Esophagus squamous epithelium (tissue), 5 donors: ENCODE measurements at regions of chr4 and their contacts with region 1.

Region 1: GRCh38 chr4:75289914-75290582 is 224.2 kb downstream of the RCHY1 start:
- DNase-seq: no peak
- H3K4me3 ChIP-seq: no peak overlapping the region
- H3K27ac ChIP-seq: peak overlapping the region in 3 of 4 donors; percentile 21 to 38 (median 29)
- H3K4me1 ChIP-seq: peaks cover 0 to 15% (median 6%) of the 10 kb centered on the region in 3 donors
- H3K27me3 ChIP-seq: no peaks in the 10 kb centered on the region
- CTCF ChIP-seq: peak in 5 of 6 experiments; percentile 9 to 61 (median 39)
- POLR2A ChIP-seq: no peak

Region 2: GRCh38 chr4:74932816-74933561 is 357.1 kb before region 1 on chr4 and contains the start of gene PARM1:
- intact Hi-C with region 1: loop called (anchors 10 kb)
- DNase-seq: peak; percentile 39
- H3K4me3 ChIP-seq: peak within 1 kb of the TSS; percentile 46 to 85 (median 55)
- H3K27ac ChIP-seq: peak within 1 kb of the TSS; percentile 39 to 90 (median 72)
- H3K4me1 ChIP-seq: peaks cover 5 to 34% (median 12%) of the 10 kb centered on the region in 3 donors
- H3K27me3 ChIP-seq: peaks cover 0 to 50% (median 0%) of the 10 kb centered on the region in 4 donors
- CTCF ChIP-seq: peak; percentile 56 to 73 (median 65)
- POLR2A ChIP-seq: peak in 2 of 4 donors; percentile 63 to 70
- total RNA-seq, gene PARM1: 1.9 to 10.3 (median 4.4) TPM